Activated CD8-positive, alpha-beta T cell treated with anti-CD3 and anti-CD28 coated beads, Interleukin-2, amount 10 ng/mL, durations not matched to agents 7 days and 5 days (primary cell): ENCODE measurements at regions of chr12 and their contacts with region 1.

Region 1: GRCh38 chr12:67648521-67649260 is at the start of gene DYRK2:
- DNase-seq: peak; percentile 82
- ATAC-seq: peak; percentile 61
- H3K4me3 Mint-ChIP-seq: peak within 1 kb of the TSS; percentile 94
- H3K27ac Mint-ChIP-seq: peak within 1 kb of the TSS; percentile 89
- H3K4me1 Mint-ChIP-seq: peaks cover 39% of the 10 kb centered on the region
- H3K27me3 Mint-ChIP-seq: no peaks in the 10 kb centered on the region
- total RNA-seq, gene DYRK2: 72.9 to 73.1 TPM

Region 2: GRCh38 chr12:67578976-67579661 is 69.6 kb before region 1 on chr12:
- CTCF ChIA-PET with region 1: interaction called, 6 read pairs
- POLR2A ChIA-PET with region 1: interaction called, 14 read pairs
- DNase-seq: peak; percentile 61
- ATAC-seq: peak; percentile 82
- H3K4me3 Mint-ChIP-seq: peak overlapping the region; percentile 34
- H3K27ac Mint-ChIP-seq: peak overlapping the region; percentile 94
- H3K4me1 Mint-ChIP-seq: peaks cover 37% of the 10 kb centered on the region
- H3K27me3 Mint-ChIP-seq: no peaks in the 10 kb centered on the region

Region 3: GRCh38 chr12:67592216-67593011 is 56.3 kb before region 1 on chr12:
- CTCF ChIA-PET with region 1: interaction called, 4 read pairs
- POLR2A ChIA-PET with region 1: interaction called, 10 read pairs
- DNase-seq: peak; percentile 53
- ATAC-seq: peak; percentile 77
- H3K4me3 Mint-ChIP-seq: peak overlapping the region; percentile 13
- H3K27ac Mint-ChIP-seq: peak overlapping the region; percentile 81
- H3K4me1 Mint-ChIP-seq: peaks cover 49% of the 10 kb centered on the region
- H3K27me3 Mint-ChIP-seq: no peaks in the 10 kb centered on the region

Region 4: DNA sequence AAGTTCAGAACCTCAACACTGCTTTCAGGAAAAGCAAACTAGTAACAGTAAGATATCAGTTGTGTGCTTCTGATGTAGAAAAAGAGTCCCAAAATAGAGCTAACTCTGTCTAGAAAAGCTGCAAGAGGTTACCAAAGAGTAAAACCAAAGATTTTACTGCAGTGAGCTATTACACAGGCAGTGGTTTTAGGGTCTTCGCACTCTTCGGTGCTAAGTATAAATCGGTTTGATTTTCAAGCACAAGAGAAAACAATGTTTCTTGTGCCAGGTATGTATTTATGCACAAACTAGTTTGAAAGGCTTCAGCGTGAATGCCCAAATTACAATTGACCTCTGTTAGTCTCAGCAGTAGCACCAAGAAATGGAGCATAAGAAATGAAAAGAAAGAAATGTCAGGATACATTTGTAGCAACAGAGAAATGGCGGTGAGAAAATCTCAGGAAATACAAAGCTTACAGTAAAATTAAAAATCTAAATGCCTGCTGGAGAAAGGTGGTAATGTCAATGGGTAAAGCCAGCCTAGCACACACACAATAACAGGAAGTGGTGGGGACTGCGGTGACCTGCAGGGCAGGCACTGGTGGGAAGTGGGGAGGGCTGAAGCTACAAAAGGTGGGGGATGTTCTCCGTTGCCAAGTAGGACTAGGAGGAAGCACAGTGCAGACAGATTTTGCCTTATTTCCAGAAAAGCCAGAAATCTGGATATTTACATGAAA is 18.2 kb before region 1 on chr12:
- CTCF ChIA-PET with region 1: interaction called, 12 read pairs
- POLR2A ChIA-PET with region 1: interaction called, 29 read pairs
- DNase-seq: peak; percentile 94
- ATAC-seq: peak; percentile 99
- H3K4me3 Mint-ChIP-seq: peak overlapping the region; percentile 45
- H3K27ac Mint-ChIP-seq: peak overlapping the region; percentile 93
- H3K4me1 Mint-ChIP-seq: peaks cover 62% of the 10 kb centered on the region
- H3K27me3 Mint-ChIP-seq: peaks cover 2% of the 10 kb centered on the region

Region 5: DNA sequence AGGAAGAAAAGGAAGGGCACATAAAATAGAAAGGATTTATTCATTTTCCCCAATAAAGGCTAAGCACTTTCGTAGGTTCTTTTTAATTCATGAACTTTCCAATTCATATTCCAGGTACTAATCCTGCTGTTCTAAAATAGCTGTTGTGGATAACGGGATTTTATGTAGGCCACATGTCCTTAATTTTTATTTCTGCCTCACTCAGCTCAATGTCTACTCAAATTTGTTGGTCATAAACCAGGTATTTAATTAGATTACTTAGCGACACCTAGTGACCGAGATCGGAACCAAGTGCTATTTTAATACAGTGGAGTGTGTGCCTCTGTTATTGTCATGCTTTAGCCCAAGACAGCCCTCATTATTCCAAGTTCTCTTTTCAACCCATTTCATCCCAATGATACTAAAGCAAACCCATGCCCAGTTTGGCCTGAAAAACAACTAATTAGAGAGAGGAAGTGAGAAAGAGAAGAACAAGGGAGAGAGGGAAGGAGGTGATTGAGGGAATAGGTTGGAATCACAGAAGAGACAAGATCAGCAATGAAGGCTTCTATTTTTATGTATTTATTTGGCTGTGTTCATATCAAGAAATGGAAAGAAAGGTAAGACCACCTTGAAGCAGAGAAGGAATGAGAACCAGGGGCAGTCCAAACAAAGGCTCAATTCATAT is 294.7 kb after region 1 on chr12:
- CTCF ChIA-PET with region 1: interaction called, 28 read pairs
- POLR2A ChIA-PET with region 1: no interaction called
- DNase-seq: peak; percentile 80
- ATAC-seq: peak; percentile 82
- H3K4me3 Mint-ChIP-seq: no peak overlapping the region
- H3K27ac Mint-ChIP-seq: no peak overlapping the region
- H3K4me1 Mint-ChIP-seq: no peaks in the 10 kb centered on the region
- H3K27me3 Mint-ChIP-seq: peaks cover 9% of the 10 kb centered on the region